Sciatic nerve (tissue), 2 donors: ENCODE measurements at regions of chr1 and their contacts with region 1.

Region 1: GRCh38 chr1:232630047-232630893 is at the start of gene SIPA1L2:
- DNase-seq: peak; percentile 97
- ATAC-seq: peak; percentile 97
- total RNA-seq, gene SIPA1L2: 61.5 TPM

Region 2: GRCh38 chr1:232728507-232729263 is 98.4 kb after region 1 on chr1:
- intact Hi-C with region 1: no loop called
- DNase-seq: no peak
- ATAC-seq: peak; percentile 95

Region 3: GRCh38 chr1:233240829-233241682 is 610.8 kb after region 1 on chr1:
- intact Hi-C with region 1: loop called (anchors 10 kb)
- DNase-seq: peak; percentile 77
- ATAC-seq: peak; percentile 92